ENCODE measurements at regions of chr19 and their contacts with region 1.

Region 1: GRCh38 chr19:38095411-38096308 is 128.4 kb downstream of the DPF1 start:
- DNase-seq: peak; percentile 50
- ATAC-seq: peak; percentile 90
- H3K4me3 ChIP-seq: no peak overlapping the region
- H3K27ac ChIP-seq: no peak overlapping the region
- H3K4me1 ChIP-seq: no peaks in the 10 kb centered on the region
- H3K27me3 ChIP-seq: no peaks in the 10 kb centered on the region
- CTCF ChIP-seq: peak; percentile 95

Region 2: DNA sequence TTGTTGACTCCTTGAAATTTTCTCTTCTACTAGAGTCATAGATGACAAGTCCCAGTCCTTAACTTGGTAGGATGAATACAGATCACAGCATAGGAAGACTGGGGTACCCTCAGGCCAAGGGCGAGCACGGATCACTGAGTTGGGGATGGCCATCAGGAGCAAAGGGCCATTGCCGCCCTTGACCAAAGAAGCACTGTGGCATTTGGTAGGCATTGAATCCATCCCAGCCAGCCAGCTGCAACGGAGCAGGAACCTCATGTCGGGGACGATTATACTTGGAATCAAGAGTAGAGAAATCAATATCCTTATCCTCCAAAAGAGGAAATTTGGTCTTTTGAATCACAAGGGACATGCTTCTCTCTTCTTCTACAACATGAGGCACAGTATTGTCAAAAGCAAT is 266.1 kb before region 1 on chr19:
- CTCF ChIA-PET with region 1: no interaction called
- POLR2A ChIA-PET with region 1: no interaction called
- in situ Hi-C with region 1: no loop called
- intact Hi-C with region 1: no loop called
- DNase-seq: no peak
- ATAC-seq: no peak
- H3K4me3 ChIP-seq: no peak overlapping the region
- H3K27ac ChIP-seq: no peak overlapping the region
- H3K4me1 ChIP-seq: no peaks in the 10 kb centered on the region
- H3K27me3 ChIP-seq: no peaks in the 10 kb centered on the region
- CTCF ChIP-seq: no peak

Region 3: DNA sequence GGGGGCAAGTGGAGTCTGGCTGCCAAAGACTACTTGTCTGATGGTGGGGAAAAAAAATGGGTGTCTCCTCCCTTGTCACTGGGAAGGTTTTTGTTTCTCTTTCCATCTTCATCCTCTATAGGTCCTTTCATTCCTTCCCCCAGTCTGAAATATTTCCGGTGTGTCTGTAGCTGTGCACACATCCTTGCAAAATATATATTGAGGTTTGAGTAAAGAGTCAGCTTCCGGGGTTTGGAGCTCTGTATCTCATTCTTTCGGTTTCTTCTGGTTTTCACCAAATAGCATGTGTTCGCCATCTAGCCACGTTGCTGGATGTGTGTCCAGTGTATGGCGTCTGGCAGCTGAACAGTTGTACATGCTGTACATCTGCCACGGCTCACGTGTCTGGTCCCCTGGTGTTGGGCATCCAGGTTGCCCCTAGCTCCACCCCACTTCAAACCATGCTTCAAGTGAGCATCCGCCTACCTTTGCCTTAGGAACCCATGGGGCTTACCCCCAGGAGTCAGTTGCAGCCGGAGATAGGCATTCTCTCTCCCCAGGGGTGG is 46.5 kb before region 1 on chr19:
- CTCF ChIA-PET with region 1: no interaction called
- POLR2A ChIA-PET with region 1: no interaction called
- in situ Hi-C with region 1: no loop called
- intact Hi-C with region 1: no loop called
- DNase-seq: no peak
- ATAC-seq: no peak
- H3K4me3 ChIP-seq: no peak overlapping the region
- H3K27ac ChIP-seq: no peak overlapping the region
- H3K4me1 ChIP-seq: no peaks in the 10 kb centered on the region
- H3K27me3 ChIP-seq: no peaks in the 10 kb centered on the region
- CTCF ChIP-seq: no peak

Region 4: DNA sequence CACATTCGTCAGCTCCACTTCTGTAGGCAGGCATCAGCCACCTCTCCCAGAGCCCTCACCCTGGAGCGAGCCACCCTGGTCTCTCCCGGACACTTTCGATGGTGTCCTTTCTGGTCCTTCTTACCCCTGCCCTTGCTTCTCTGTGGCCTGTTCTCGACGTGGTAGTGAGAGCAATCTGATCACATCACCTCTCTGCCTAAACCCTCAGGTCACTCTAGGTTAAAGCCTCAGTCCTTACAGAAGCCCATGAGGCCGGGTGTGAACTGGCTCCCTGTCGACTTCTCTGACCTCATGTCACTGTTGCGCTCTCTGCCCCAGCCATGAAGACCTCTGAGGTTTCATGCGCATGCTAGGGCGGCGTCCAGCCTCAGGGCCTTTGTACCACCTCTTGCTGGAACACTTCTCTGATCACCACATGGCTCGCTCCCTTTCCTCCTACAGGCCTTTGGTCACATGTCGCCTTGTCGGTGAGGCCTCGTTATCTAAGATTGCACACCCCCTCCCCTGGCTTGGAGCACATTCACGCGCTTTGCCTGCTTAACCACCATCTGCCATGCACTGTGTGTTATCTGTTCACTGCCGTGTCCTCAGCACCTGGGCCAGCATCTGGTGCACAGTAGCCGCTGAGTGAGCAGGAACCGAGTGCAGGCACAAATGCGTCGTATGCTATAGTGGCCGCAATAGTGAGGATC is 26.9 kb after region 1 on chr19:
- CTCF ChIA-PET with region 1: no interaction called
- POLR2A ChIA-PET with region 1: interaction called, 14 read pairs
- in situ Hi-C with region 1: no loop called
- intact Hi-C with region 1: no loop called
- DNase-seq: no peak
- ATAC-seq: peak; percentile 48
- H3K4me3 ChIP-seq: no peak overlapping the region
- H3K27ac ChIP-seq: no peak overlapping the region
- H3K4me1 ChIP-seq: no peaks in the 10 kb centered on the region
- H3K27me3 ChIP-seq: no peaks in the 10 kb centered on the region
- CTCF ChIP-seq: no peak

Measured in Panc1 (cell line).